ENCODE measurements at regions of chr9 and their contacts with region 1.

Region 1: DNA sequence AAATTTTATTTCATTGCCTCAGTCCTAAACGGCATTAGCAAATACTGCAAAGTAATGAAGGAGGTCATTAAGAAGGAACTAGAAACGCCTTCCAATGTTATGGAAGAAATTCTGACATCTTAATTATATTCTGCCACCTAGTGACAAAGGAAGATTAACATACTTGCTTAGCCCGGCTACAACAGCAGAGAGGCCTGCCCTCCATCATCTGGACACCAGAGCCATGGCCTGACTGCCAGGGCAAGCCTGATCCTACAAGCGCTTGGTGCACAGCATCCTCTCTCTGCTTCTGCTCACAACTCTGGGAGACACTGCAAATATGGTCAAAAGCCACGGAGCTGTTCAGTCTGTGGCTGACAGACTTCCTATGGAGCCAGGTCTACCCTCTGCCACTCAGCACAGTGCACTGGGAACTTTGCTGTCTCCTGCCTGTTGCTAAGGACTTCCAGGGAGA is 87.3 kb upstream of the SLC44A1 start:
- DNase-seq: peak; percentile 47 to 69
- ATAC-seq: peak; percentile 82 to 95 (median 89)
- H3K4me3 ChIP-seq: no peak overlapping the region
- H3K27ac ChIP-seq: no peak overlapping the region
- H3K4me1 ChIP-seq: peaks cover 5% of the 10 kb centered on the region
- H3K27me3 ChIP-seq: no peaks in the 10 kb centered on the region
- CTCF ChIP-seq: peak; percentile 52

Region 2: DNA sequence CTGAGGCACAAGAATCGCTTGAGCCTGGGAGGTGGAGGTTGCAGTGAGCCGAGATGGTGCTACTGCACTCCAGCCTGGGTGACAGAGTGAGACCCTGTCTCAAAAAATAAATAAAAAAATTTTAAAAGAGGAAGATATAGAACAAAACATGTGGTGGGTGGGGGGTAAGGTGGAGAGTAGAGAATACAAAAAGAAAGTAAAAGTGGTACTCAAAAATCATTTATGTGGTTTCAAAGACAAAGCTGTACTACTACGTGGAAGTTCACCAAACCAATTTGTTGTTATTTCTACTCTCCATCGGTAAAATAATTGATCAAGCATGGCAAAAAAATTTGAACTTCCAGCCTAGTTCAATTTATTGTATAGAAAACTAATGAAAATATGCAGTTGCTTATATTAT is 612.5 kb before region 1 on chr9:
- intact Hi-C with region 1: no loop called
- DNase-seq: no peak
- ATAC-seq: no peak
- H3K4me3 ChIP-seq: no peak overlapping the region
- H3K27ac ChIP-seq: no peak overlapping the region
- H3K4me1 ChIP-seq: no peaks in the 10 kb centered on the region
- H3K27me3 ChIP-seq: no peaks in the 10 kb centered on the region
- CTCF ChIP-seq: no peak

Region 3: DNA sequence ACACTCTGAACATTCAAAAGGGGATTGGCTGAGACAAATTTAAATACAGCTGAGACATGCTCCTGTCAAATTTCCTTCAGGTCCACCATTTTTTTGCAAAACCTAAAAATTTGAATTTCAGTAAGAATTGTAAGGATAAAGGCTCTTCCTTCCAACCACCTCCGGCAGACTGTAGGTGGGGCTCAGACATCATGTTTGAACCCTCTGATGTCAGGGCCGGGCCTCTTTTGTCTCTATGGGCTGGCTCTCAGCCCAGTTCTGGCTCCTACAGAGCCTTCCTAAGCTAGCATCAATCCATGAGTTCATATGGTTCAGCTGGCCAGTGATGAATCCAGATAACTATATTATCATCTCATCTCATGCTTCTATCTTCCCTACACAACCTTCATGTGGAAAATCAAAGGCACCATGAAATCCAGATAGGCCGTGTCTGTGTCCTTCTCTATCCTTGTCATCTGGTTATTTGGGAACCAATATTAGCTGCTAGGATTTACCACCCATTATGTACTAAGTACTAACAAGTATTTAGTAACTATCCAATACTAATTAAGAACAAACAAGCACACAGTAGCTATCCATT is 349.0 kb before region 1 on chr9:
- intact Hi-C with region 1: loop called in 1 of 2 experiments (anchors 2 kb)
- DNase-seq: peak in 1 of 2 donors; percentile 22
- ATAC-seq: no peak
- H3K4me3 ChIP-seq: no peak overlapping the region
- H3K27ac ChIP-seq: peak overlapping the region; percentile 19
- H3K4me1 ChIP-seq: peaks cover 18% of the 10 kb centered on the region
- H3K27me3 ChIP-seq: no peaks in the 10 kb centered on the region
- CTCF ChIP-seq: no peak

Region 4: DNA sequence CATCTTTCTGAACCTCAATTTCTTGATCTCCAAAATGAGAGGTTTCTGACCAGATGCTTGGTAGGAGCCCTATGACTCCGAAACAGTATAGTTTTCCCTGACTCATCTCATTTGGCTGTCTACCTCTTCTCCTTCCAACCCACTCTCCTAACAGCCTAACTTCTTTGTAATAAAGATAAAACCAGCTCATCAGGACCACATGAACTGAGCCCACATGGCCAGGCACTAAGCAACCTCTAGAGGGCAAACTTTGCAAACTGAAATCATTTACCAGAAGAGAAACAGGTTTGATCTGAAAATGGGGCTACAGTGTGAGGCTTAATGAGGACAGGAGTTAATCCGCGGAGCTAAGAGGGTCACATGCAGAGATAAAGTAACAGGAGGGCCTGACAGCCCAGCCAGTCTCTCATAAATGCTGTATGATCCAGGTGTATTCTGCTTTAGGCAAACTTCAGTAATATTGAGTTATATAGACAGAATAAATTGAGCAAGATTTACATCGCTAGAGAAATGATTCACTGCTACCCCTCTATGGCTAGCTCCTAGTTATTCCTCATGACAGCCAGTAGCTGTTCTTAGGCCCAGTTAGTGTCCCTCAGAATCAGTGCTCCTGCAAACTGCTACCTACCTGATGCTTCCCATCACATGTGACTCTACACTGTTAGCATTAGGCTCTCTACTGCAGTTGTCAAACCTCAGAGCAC is 293.8 kb before region 1 on chr9:
- intact Hi-C with region 1: loop called (anchors 5 kb)
- DNase-seq: no peak
- ATAC-seq: peak; percentile 45 to 87 (median 75)
- H3K4me3 ChIP-seq: no peak overlapping the region
- H3K27ac ChIP-seq: peak overlapping the region; percentile 40
- H3K4me1 ChIP-seq: peaks cover 37% of the 10 kb centered on the region
- H3K27me3 ChIP-seq: no peaks in the 10 kb centered on the region
- CTCF ChIP-seq: peak; percentile 79

Region 5: GRCh38 chr9:104868687-104869404 is 288.3 kb before region 1 on chr9:
- intact Hi-C with region 1: loop called (anchors 5 kb)
- DNase-seq: peak; percentile 72 to 86
- ATAC-seq: peak; percentile 88 to 95 (median 89)
- H3K4me3 ChIP-seq: no peak overlapping the region
- H3K27ac ChIP-seq: peak overlapping the region; percentile 81
- H3K4me1 ChIP-seq: peaks cover 69% of the 10 kb centered on the region
- H3K27me3 ChIP-seq: no peaks in the 10 kb centered on the region
- CTCF ChIP-seq: no peak

Region 6: DNA sequence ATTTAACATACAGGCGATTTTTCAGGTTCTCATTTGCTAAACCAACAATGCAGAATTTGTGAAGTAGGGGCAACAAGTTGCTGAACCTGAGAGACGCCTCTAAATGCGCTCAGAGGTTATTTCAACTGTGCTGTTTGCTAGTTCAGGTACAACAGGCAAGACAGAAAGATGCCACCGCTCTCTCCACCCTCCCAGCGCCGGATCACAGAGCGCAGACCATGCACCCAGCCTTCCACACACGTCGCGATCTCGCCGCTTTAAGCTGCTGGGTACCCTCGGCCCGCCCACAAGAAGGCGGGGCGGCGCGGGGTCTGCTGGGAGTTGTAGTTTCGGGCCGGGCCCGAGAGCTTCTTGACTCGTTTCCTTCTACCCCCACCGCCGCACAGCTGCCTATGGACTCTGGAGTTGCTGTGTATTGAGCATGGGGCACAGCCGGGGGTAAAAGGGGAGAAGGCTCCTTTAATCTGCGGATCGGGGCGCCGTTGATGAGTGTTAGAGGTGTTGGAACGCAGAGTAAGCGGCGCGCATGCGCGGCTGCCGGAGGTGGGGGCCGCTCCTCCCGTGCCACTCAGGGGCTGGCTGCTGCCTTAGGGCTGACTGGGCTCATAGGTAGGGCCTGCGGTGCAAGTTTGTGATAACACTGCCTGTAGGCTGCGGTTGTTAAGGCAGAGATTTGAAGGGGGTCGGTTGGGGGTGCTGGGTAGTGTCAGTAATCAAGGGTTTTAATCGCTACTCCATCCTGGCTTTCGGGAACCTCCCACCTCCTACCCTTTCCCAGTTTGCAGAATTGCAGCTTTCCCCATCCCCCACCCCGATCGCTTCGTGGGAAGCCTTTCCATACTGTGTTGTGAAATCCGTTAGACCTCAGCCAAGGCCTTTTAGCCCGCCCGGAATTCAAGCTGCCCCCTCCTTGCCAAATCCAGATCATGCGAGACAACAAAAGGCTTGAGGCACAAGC is 188.9 kb before region 1 on chr9:
- intact Hi-C with region 1: loop called (anchors 10 kb)
- DNase-seq: peak; percentile 92 to 94
- ATAC-seq: peak; percentile 91 to 96 (median 92)
- H3K4me3 ChIP-seq: peak overlapping the region; percentile 94
- H3K27ac ChIP-seq: peak overlapping the region; percentile 99
- H3K4me1 ChIP-seq: peaks cover 18% of the 10 kb centered on the region
- H3K27me3 ChIP-seq: no peaks in the 10 kb centered on the region
- CTCF ChIP-seq: no peak

Region 7: GRCh38 chr9:105141146-105141975 is 15.8 kb before region 1 on chr9:
- intact Hi-C with region 1: no loop called
- DNase-seq: no peak
- ATAC-seq: peak in 1 of 4 donors; percentile 15
- H3K4me3 ChIP-seq: no peak overlapping the region
- H3K27ac ChIP-seq: no peak overlapping the region
- H3K4me1 ChIP-seq: peaks cover 3% of the 10 kb centered on the region
- H3K27me3 ChIP-seq: no peaks in the 10 kb centered on the region
- CTCF ChIP-seq: no peak

Region 8: DNA sequence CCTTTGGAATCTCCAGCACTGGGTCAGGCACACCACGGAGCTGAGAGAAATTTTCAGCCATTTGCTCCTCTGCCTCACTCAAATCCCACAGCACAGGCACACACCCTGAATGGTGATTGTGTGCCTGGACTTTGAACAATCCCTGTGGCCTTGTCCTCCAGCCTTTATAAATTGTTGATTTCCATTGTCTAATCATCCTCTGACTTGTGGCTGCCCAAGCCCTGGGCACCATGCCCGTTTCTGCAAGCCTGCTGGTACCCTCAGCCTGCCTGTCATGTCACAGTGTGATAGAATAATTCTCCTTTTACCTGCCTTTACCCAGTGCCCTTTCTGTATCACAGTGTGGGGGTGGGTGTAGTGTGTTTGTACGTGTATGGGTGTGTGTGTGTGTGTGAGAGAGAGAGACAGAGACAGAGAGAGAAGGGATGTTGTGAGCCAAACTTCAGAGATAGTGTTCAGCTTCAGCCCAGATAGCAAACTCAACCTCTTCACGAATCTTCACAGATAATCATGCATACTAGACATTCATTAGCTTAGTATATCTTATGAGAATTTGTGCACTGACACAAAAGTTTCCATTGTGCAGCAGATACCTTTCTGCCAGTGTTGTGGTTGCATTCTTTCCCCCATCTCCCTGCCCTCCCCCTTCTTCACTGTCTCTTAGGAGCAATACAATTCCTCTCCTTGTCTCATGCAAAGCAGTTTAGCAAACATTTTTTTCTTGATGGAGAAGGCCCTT is 59.5 kb after region 1 on chr9:
- intact Hi-C with region 1: no loop called
- DNase-seq: no peak
- ATAC-seq: no peak
- H3K4me3 ChIP-seq: no peak overlapping the region
- H3K27ac ChIP-seq: no peak overlapping the region
- H3K4me1 ChIP-seq: peaks cover 3% of the 10 kb centered on the region
- H3K27me3 ChIP-seq: no peaks in the 10 kb centered on the region
- CTCF ChIP-seq: no peak